PC-3 (cell line): ENCODE measurements at regions of chr6 and their contacts with region 1.

Region 1: GRCh38 chr6:1761477-1761877 is 151.8 kb downstream of the FOXC1 start:
- DNase-seq: peak; percentile 10
- ATAC-seq: peak; percentile 45; the same call in 1 of the 2 replicates
- H3K4me3 ChIP-seq: no peak overlapping the region
- H3K27ac ChIP-seq: no peak overlapping the region
- H3K4me1 ChIP-seq: peaks cover 31% of the 10 kb centered on the region
- H3K27me3 ChIP-seq: no peaks in the 10 kb centered on the region
- CTCF ChIP-seq: no peak

Region 2: DNA sequence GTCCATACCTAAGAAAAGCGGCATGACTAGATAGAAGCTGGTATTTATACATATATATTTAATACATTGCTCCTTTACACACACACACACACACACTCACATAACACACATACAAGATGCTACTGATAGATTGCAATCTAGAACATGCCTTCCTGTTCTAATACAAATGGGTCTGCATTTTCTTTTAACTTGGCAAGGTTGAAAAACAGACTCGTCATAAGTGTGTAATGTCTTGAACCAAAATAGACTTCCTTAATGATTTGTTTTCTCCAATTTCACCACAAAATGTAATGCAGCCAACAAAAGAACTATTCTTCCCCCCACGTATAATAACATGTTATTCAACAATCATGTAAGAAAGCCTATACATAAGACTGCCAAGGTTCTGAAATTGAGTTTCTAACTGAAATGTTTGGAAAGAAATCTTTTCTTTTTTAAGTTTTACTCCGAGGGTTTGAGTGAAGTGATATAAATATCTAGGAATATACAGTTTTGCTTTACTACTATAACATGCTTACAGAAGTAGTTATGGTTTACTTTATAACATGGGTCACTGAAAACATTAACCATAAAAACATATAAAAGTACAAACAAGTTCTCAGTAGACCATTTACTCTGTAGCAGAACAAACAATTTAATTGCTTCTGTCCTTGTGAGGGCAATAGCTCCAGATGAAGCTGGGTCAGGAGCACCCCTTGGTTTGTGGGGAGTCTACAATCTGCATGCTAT is 55.7 kb after region 1 on chr6:
- CTCF ChIA-PET with region 1: no interaction called
- POLR2A ChIA-PET with region 1: no interaction called
- intact Hi-C with region 1: loop called (anchors 1 kb)
- DNase-seq: no peak
- ATAC-seq: peak; percentile 64
- H3K4me3 ChIP-seq: no peak overlapping the region
- H3K27ac ChIP-seq: no peak overlapping the region
- H3K4me1 ChIP-seq: no peaks in the 10 kb centered on the region
- H3K27me3 ChIP-seq: no peaks in the 10 kb centered on the region
- CTCF ChIP-seq: no peak